HEK293 (cell line): ENCODE measurements at regions of chr2 and their contacts with region 1.

Region 1: GRCh38 chr2:46650556-46651001 is 171.2 kb downstream of the TMEM247 start:
- H3K4me3 ChIP-seq: no peak overlapping the region
- H3K27ac ChIP-seq: no peak overlapping the region
- H3K4me1 ChIP-seq: peaks cover 10% of the 10 kb centered on the region
- CTCF ChIP-seq: peak; percentile 72

Region 2: GRCh38 chr2:46555011-46555410 is 95.6 kb before region 1 on chr2:
- CTCF ChIA-PET with region 1: no interaction called
- POLR2A ChIA-PET with region 1: no interaction called
- H3K4me3 ChIP-seq: no peak overlapping the region
- H3K27ac ChIP-seq: no peak overlapping the region
- H3K4me1 ChIP-seq: no peaks in the 10 kb centered on the region
- CTCF ChIP-seq: no peak

Region 3: GRCh38 chr2:46601328-46601963 is 49.1 kb before region 1 on chr2:
- CTCF ChIA-PET with region 1: interaction called, 16 read pairs
- POLR2A ChIA-PET with region 1: no interaction called
- H3K4me3 ChIP-seq: no peak overlapping the region
- H3K27ac ChIP-seq: no peak overlapping the region
- H3K4me1 ChIP-seq: no peaks in the 10 kb centered on the region
- CTCF ChIP-seq: no peak

Region 4: DNA sequence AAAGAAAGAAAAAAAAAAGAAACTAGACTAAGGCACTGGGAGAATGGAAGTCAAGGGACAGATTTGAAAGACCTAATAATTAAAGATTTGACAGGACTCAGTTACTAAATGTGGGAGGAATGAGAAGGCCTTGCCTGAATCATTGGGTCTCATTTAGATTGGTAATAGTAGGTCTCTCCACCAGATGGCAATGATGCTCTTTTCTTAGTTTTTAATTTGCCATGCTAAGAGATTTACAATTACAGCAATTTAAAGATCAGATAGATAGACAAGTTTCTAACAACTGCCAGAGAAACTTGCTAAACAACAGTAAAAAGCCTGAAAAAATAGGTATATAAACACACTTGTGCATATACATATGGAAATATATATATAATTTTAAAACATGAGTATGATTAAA is 18.2 kb before region 1 on chr2:
- CTCF ChIA-PET with region 1: interaction called, 11 read pairs
- POLR2A ChIA-PET with region 1: interaction called, 3 read pairs
- H3K4me3 ChIP-seq: no peak overlapping the region
- H3K27ac ChIP-seq: no peak overlapping the region
- H3K4me1 ChIP-seq: no peaks in the 10 kb centered on the region
- CTCF ChIP-seq: 0 out of 2 replicates have a peak, but pooled peaks have one; percentile 20

Region 5: DNA sequence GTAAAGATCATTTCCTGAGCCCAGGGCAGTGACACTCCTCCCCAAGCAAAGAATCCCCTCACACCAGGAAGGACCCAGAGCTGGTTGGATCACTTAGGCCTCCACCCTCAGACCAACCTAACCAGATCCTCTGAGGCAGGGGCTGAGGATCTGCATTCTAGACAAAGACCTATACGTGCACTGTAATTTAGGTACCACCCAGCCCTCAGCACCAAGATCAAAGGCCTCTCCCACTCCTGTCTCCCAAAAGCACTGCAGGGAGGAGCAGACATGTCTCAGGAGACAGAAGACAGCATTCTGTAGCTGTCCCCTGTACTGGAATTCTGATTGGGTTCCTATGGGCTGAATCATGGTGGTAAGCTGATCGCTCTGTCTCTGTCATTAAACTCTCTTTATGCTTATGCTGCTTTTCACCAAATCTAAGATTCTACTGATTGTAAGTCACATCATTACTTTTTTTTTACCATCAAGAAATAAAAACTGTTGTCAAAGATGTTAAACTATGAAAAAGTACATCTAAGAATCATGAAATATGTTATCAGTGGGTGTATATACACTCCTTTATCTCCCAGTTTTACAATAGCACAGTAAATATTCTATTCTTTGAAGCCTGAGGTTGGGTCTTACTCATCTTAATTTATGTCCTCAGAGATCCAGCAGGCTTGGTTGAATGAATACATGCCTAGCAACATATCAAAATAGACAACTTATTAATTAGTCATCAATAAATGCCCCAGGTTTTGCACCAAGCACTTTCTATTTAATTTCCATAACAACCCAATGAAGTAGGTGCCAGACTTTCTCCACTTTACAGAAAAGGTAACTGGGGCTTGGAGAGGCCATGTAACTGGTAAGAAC is 236.7 kb after region 1 on chr2:
- CTCF ChIA-PET with region 1: interaction called, 14 read pairs
- POLR2A ChIA-PET with region 1: no interaction called
- H3K4me3 ChIP-seq: no peak overlapping the region
- H3K27ac ChIP-seq: no peak overlapping the region
- H3K4me1 ChIP-seq: no peaks in the 10 kb centered on the region
- CTCF ChIP-seq: no peak